ENCODE measurements at regions of chr7 and their contacts with region 1.

Region 1: DNA sequence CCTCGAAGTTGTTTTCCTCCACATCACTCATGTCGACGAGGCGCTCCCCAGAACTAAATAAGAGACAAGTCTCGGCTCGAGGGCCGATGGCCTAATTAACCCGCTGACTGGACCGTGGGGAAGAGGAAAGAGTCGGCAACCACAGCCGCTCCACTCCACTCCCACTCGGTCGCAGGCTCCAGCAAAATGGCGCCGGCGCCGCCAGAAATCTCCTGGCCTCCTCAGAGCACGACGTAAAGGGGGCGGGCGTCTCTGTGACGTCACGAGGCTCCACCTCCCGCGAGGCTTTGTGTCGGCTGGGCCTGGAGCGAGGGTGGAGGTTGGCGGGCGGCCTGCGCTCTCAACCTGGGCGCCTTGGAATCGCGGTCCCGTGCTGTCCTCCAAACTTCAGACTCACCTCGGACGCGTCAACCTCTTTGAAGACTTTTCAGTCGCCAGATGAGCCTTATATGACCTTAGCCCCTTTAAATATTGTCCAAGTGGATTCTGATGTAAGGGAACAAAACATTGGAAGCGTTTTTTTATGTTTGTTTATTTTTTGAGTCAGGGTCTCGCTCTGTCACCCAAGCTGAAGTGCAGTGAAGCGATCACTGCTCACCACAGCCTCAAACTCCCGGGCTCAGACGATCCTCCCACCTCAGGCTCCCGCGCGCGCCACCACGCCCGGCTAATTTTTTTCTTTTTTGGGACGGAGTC is at the start of gene TRA2A:
- DNase-seq: peak; percentile 86 to 99
- H3K4me3 ChIP-seq: peak within 1 kb of the TSS; percentile 89 to 100 (median 100)
- H3K27ac ChIP-seq: peak within 1 kb of the TSS; percentile 100
- H3K4me1 ChIP-seq: peaks cover 0 to 10% (median 5%) of the 10 kb centered on the region in 4 experiments; a peak in 5 of 7 replicates
- H3K27me3 ChIP-seq: no peaks in the 10 kb centered on the region
- CTCF ChIP-seq: no peak
- EP300 ChIP-seq: no peak
- POLR2A ChIP-seq: peak; percentile 97 to 99
- RAD21 ChIP-seq: no peak
- total RNA-seq, gene TRA2A: 122 and 125 TPM in 2 replicates

Region 2: DNA sequence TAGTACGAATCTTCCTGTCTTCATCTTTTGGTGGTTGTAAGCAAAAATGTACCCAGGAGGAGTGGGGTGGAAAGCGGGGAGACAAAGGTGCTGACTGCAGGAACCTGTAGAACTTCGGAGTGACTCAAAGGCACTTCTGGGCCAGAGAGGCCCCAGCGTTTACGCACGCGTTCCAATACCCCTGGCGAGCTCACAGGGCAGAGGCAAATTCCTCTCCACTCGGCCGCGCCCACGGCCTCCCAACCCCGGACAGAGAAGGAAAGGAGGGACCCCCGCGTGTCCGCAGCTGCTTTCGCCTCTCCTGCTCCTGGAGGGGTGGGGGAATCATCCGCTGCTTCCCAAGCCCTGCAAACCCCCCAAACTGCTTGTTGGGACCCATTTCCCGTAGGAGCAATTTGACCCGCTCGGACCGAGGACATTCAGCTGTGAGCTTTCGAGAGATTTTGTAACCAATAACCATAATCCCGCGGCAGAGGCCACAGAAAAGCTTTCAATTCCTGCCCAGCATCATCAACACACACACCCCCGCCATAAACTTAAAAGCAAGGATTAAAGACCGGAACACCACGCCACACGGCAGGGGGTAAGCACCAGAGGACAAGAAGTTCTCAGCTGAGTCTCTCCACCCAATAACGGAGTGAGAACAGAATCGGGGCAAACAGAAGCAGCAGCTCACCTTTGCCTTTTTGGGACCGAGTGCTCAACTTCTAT is 64.0 kb before region 1 on chr7:
- CTCF ChIA-PET with region 1: no interaction called
- POLR2A ChIA-PET with region 1: interaction called, 52 read pairs
- DNase-seq: peak in 1 of 2 experiments; percentile 73
- H3K4me3 ChIP-seq: peak overlapping the region; percentile 81 to 95 (median 88)
- H3K27ac ChIP-seq: peak overlapping the region; percentile 86; the same call in 1 of the 2 replicates
- H3K4me1 ChIP-seq: peaks cover under 1 to 18% (median 8%) of the 10 kb centered on the region in 4 experiments; a peak in 6 of 7 replicates
- H3K27me3 ChIP-seq: no peaks in the 10 kb centered on the region
- CTCF ChIP-seq: 0 out of 4 replicates have a peak, but pooled peaks of 1 of the 3 experiments have one; percentile 1
- EP300 ChIP-seq: no peak
- POLR2A ChIP-seq: peak in 1 of 2 experiments; percentile 49; a peak in 2 of 3 replicates
- RAD21 ChIP-seq: no peak

Region 3: GRCh38 chr7:23514755-23515154 is 17.2 kb before region 1 on chr7:
- CTCF ChIA-PET with region 1: interaction called, 7 read pairs
- POLR2A ChIA-PET with region 1: interaction called, 21 read pairs
- DNase-seq: no peak
- H3K4me3 ChIP-seq: no peak overlapping the region
- H3K27ac ChIP-seq: no peak overlapping the region
- H3K4me1 ChIP-seq: no peaks in the 10 kb centered on the region
- H3K27me3 ChIP-seq: no peaks in the 10 kb centered on the region
- CTCF ChIP-seq: no peak
- EP300 ChIP-seq: no peak
- POLR2A ChIP-seq: no peak
- RAD21 ChIP-seq: no peak